Activated CD4-positive, alpha-beta T cell treated with anti-CD3 and anti-CD28 coated beads, Interleukin-2, amount 10 ng/mL, durations not matched to agents 7 days and 5 days (primary cell): ENCODE measurements at regions of chr22 and their contacts with region 1.

Region 1: GRCh38 chr22:24845041-24845898 is 39.3 kb downstream of the SGSM1 start:
- DNase-seq: no peak
- H3K4me3 Mint-ChIP-seq: no peak overlapping the region
- H3K27ac Mint-ChIP-seq: no peak overlapping the region
- H3K4me1 Mint-ChIP-seq: peaks cover 8% of the 10 kb centered on the region
- H3K27me3 Mint-ChIP-seq: no peaks in the 10 kb centered on the region

Region 2: DNA sequence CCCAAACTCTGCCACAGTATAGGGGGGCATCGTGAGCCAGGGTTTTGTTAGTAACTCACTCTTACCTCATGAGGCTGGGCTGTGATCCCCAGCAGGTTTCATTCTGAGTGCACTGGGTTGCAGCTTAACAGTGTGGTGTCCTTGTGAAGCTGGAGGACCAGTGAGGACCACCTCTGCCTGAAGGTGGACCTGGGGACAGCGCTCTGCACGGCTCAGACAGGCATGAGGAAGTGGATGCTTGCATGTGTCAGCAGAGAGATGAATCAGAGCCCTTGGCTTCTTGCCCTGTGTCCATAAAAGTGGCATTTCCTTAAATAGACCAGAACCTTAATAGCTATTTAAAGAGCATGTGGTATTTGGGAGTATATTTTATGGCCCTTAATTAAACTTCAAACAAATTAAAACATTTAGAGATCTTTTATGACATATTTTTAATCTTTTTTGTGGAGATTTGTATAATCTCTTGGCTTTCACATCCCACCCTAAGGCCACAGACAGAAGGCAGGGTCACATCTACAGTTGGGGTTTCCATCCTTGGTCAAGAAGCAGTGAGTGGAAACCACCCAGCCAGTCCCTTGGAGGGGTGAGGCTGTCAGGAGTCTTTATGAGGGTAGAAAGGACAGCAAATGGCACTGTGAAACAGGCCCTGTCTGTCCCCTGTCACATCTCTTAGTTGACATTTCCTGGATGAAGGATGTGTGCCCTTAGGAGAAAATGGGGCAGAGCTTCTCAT is 442.6 kb before region 1 on chr22:
- CTCF ChIA-PET with region 1: no interaction called
- POLR2A ChIA-PET with region 1: no interaction called
- DNase-seq: no peak
- H3K4me3 Mint-ChIP-seq: no peak overlapping the region
- H3K27ac Mint-ChIP-seq: peak overlapping the region; percentile 38
- H3K4me1 Mint-ChIP-seq: peaks cover 52% of the 10 kb centered on the region
- H3K27me3 Mint-ChIP-seq: no peaks in the 10 kb centered on the region

Region 3: GRCh38 chr22:24768537-24769374 is 76.5 kb before region 1 on chr22:
- CTCF ChIA-PET with region 1: interaction called, 11 read pairs
- POLR2A ChIA-PET with region 1: no interaction called
- DNase-seq: peak; percentile 61
- H3K4me3 Mint-ChIP-seq: no peak overlapping the region
- H3K27ac Mint-ChIP-seq: no peak overlapping the region
- H3K4me1 Mint-ChIP-seq: no peaks in the 10 kb centered on the region
- H3K27me3 Mint-ChIP-seq: peaks cover 6% of the 10 kb centered on the region